H1 (cell line): ENCODE measurements at regions of chr5 and their contacts with region 1.

Region 1: GRCh38 chr5:142235055-142235797 is 89.6 kb downstream of the SPRY4 start:
- DNase-seq: peak; percentile 80 to 83
- H3K4me3 ChIP-seq: peak overlapping the region in 1 of 4 experiments; percentile 27; a peak in 2 of 8 replicates
- H3K27ac ChIP-seq: peak overlapping the region; percentile 54
- H3K4me1 ChIP-seq: peaks cover 8 to 19% (median 15%) of the 10 kb centered on the region in 4 experiments
- H3K27me3 ChIP-seq: no peaks in the 10 kb centered on the region
- CTCF ChIP-seq: no peak
- EP300 ChIP-seq: peak in 1 of 2 experiments; percentile 93; a peak in 2 of 3 replicates
- POLR2A ChIP-seq: peak in 1 of 2 experiments; percentile 45; a peak in 1 of 3 replicates
- RAD21 ChIP-seq: peak in 1 of 2 experiments; percentile 1; a peak in 1 of 4 replicates

Region 2: GRCh38 chr5:142221091-142221860 is 13.9 kb before region 1 on chr5:
- CTCF ChIA-PET with region 1: interaction called, 22 read pairs
- POLR2A ChIA-PET with region 1: interaction called, 14 read pairs
- DNase-seq: no peak
- H3K4me3 ChIP-seq: no peak overlapping the region
- H3K27ac ChIP-seq: no peak overlapping the region
- H3K4me1 ChIP-seq: peaks cover 8 to 15% (median 14%) of the 10 kb centered on the region in 4 experiments
- H3K27me3 ChIP-seq: no peaks in the 10 kb centered on the region
- CTCF ChIP-seq: no peak
- EP300 ChIP-seq: no peak
- POLR2A ChIP-seq: no peak
- RAD21 ChIP-seq: no peak

Region 3: GRCh38 chr5:142250119-142250518 is 14.9 kb after region 1 on chr5:
- CTCF ChIA-PET with region 1: interaction called, 4 read pairs
- POLR2A ChIA-PET with region 1: interaction called, 10 read pairs
- DNase-seq: no peak
- H3K4me3 ChIP-seq: no peak overlapping the region
- H3K27ac ChIP-seq: no peak overlapping the region
- H3K4me1 ChIP-seq: no peaks in the 10 kb centered on the region
- H3K27me3 ChIP-seq: no peaks in the 10 kb centered on the region
- CTCF ChIP-seq: no peak
- EP300 ChIP-seq: no peak
- POLR2A ChIP-seq: no peak
- RAD21 ChIP-seq: no peak